AG04449 (cell line): ENCODE measurements at regions of chr10 and their contacts with region 1.

Region 1: DNA sequence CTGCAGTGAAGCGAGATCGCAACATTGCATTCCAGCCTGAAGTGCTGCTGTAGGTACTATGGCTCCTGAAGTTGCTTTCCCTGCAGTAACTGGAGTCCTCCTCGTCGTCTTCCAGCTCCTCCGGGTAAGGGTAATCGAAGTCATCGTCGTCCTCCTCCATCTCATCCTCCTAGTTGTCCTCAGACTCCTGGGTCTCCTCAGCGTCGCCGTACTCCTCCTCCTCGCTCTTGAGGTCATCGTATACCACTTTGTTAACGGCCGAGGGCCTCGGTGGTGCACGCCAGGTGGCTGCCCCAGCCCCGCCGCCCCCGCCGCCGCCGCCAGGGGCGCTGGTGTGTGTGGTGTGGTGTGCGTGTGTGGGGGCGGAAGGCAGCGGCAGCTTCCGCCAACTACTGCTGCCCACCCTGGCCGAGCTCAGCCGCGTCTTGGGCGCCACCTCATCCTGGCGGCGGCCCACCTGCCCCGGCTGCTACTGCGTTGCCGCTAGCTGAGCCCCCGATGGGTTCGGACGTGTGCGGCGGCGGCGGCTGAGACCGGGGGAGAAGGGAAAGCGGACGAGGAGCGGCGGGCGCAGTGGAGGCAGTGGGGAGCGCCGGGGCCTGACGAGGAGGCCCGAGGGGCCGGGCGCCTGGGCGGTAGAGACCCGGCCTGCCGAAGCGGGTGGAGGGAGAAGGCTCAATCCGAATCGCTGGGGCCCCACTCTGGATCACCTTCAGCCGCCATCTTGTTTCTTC is 11.8 kb upstream of the ACBD5 start:
- DNase-seq: no peak
- H3K4me3 ChIP-seq: peak overlapping the region; percentile 59
- CTCF ChIP-seq: peak; percentile 51

Region 2: DNA sequence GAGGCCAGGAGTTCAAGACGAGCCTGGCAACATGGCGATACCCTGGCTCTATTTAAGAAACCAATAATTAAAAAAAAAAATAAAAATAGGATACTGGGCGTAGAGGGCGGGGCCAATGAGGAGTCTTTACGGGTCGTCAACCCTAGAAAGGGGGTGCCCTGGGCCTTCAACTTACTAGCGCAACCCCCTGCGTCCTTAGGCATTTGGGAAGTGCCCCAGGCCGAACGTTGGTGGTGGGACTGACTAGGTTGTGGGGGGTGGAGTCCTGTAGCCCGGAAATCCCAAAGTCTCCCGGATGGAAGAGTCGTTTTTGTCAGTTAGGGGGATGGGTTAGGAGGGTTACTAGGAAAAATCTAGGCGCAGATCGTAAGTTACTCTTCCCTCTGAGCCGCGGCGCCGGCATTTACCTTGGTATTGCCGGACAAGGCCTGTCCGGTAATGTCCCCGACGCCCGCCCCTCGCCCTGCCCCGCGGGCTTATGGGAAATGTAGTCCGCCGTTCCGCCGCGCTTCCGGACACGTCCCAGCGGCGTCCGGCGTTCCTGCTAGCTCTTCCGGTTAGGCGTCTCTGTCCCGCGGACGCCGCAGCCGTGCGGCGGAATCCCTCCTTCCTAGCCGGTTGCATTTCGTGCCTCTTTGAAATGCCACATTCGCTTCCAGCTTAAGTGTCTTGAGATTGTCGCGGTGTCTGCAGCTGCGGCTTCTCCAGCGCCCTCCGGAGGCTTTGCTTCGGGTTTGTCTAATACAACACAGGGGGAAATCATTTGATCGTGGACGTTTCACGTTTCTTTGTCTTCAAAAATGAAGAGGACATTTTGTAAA is 10.6 kb before region 1 on chr10:
- CTCF ChIA-PET with region 1: interaction called, 20 read pairs
- POLR2A ChIA-PET with region 1: no interaction called
- DNase-seq: peak; percentile 66
- H3K4me3 ChIP-seq: peak overlapping the region; percentile 77
- CTCF ChIP-seq: peak; percentile 31

Region 3: GRCh38 chr10:27383595-27384542 is 131.4 kb after region 1 on chr10:
- CTCF ChIA-PET with region 1: no interaction called
- POLR2A ChIA-PET with region 1: no interaction called
- DNase-seq: no peak
- H3K4me3 ChIP-seq: no peak overlapping the region
- CTCF ChIP-seq: no peak